AG04449 (cell line): ENCODE measurements at regions of chr18 and their contacts with region 1.

Region 1: GRCh38 chr18:8988261-8988871 is 114.1 kb upstream of the NDUFV2 start:
- DNase-seq: no peak
- H3K4me3 ChIP-seq: no peak overlapping the region
- CTCF ChIP-seq: peak; percentile 86

Region 2: DNA sequence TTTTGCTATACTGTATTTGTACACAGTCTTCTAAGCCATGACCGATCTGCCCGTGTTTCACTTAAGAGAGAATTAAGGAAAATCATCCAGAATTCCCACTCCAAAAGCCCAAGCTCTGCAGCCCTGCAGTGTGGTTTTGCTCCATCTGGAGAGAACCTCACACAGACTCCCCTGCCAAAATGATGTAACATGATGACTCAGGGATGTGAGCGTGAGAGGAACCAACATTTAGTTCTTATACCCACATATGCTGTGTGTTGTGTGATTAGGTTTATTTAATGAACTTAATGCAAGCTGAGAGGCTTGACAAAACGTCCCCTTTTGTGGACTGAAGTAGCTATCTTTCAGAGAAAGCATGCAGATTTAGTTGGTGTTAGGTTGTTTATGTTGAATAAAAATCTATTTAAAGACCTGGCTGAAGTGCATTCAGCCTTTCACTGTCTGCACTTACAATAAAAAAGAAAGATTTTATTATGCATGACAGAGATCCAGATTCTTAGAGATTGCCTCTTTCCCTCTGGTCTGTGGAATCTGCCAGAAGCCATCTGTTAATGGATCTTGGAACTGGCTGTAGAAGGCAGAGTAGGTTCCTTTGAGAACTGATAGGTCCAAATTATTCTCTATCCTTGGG is 372.9 kb before region 1 on chr18:
- CTCF ChIA-PET with region 1: interaction called, 10 read pairs
- POLR2A ChIA-PET with region 1: no interaction called
- DNase-seq: peak; percentile 83
- H3K4me3 ChIP-seq: peak overlapping the region; percentile 0; the same call in 1 of the 2 replicates
- CTCF ChIP-seq: no peak

Region 3: GRCh38 chr18:8661754-8662569 is 326.4 kb before region 1 on chr18:
- CTCF ChIA-PET with region 1: interaction called, 121 read pairs
- POLR2A ChIA-PET with region 1: no interaction called
- DNase-seq: no peak
- H3K4me3 ChIP-seq: no peak overlapping the region
- CTCF ChIP-seq: no peak

Region 4: DNA sequence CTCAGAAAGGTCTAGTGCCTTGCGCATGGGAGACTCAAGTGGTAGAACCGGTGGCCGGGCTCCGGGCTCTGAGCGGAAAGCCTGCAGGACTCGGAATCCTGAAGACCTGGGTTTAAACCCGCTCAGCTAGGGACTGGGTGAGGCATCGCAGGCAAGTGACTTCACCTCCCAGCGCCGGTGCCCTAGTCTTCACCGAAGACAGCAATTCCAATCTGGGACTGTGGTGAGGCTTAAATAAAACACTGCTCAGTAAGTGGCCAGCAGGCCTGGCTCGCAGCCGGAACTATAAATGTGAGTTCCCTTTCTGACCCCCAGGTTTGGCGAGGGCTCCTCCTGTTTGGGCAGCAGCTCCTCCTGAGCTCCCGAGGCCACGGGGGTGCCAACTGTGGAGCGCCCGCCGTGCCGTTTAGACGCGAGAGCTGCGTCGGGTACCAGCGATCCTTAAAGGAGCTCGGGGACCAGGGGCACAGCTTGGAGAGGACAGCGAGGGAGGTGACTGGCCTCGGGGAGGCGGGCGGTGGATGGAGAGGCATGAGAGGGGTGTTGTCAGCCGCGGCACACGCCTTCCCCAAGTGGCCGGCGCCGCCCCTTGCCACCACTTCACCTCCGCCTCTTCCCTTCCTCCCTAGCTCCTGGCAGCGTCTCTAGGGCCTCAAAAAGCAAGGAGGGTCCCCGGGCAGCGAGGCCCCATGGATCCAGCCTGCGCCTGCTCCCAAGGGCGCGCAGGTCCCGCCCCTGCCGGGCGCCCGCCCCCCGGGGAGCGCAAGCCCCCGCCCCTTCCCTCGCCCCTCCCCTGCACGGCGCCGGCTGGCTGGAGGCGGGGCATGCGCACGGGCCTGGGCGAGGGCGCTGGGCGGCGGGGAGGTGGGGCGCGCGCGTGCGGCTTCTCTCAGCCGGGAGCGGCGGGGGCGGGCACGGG is 283.7 kb before region 1 on chr18:
- CTCF ChIA-PET with region 1: interaction called, 35 read pairs
- POLR2A ChIA-PET with region 1: interaction called, 3 read pairs
- DNase-seq: peak; percentile 76
- H3K4me3 ChIP-seq: peak overlapping the region; percentile 86
- CTCF ChIP-seq: no peak

Region 5: GRCh38 chr18:8800449-8800848 is 187.9 kb before region 1 on chr18:
- CTCF ChIA-PET with region 1: interaction called, 35 read pairs
- POLR2A ChIA-PET with region 1: interaction called, 6 read pairs
- DNase-seq: peak; percentile 99
- H3K4me3 ChIP-seq: no peak overlapping the region
- CTCF ChIP-seq: no peak

Region 6: GRCh38 chr18:8841781-8842485 is 146.4 kb before region 1 on chr18:
- CTCF ChIA-PET with region 1: interaction called, 14 read pairs
- POLR2A ChIA-PET with region 1: no interaction called
- DNase-seq: no peak
- H3K4me3 ChIP-seq: no peak overlapping the region
- CTCF ChIP-seq: no peak

Region 7: GRCh38 chr18:8969639-8970390 is 18.6 kb before region 1 on chr18:
- CTCF ChIA-PET with region 1: interaction called, 14 read pairs
- POLR2A ChIA-PET with region 1: no interaction called
- DNase-seq: no peak
- H3K4me3 ChIP-seq: no peak overlapping the region
- CTCF ChIP-seq: no peak

Region 8: GRCh38 chr18:9290156-9290555 is 301.8 kb after region 1 on chr18:
- CTCF ChIA-PET with region 1: no interaction called
- POLR2A ChIA-PET with region 1: no interaction called
- DNase-seq: no peak
- H3K4me3 ChIP-seq: no peak overlapping the region
- CTCF ChIP-seq: no peak